CD8-positive, alpha-beta T cell (primary cell): ENCODE measurements at regions of chr3 and their contacts with region 1.

Region 1: GRCh38 chr3:172039436-172040077 is at the start of gene FNDC3B:
- DNase-seq: peak; percentile 84 to 95 (median 90)
- ATAC-seq: peak; percentile 93
- H3K4me3 ChIP-seq: peak within 1 kb of the TSS; percentile 88 to 90
- H3K4me3 Mint-ChIP-seq: peak within 1 kb of the TSS; percentile 99
- H3K27ac ChIP-seq: peak within 1 kb of the TSS; percentile 61 to 84
- H3K27ac Mint-ChIP-seq: peak within 1 kb of the TSS; percentile 97
- H3K4me1 ChIP-seq: peaks cover 20% of the 10 kb centered on the region
- H3K4me1 Mint-ChIP-seq: peaks cover 38% of the 10 kb centered on the region
- H3K27me3 ChIP-seq: no peaks in the 10 kb centered on the region
- H3K27me3 Mint-ChIP-seq: peaks cover 2% of the 10 kb centered on the region
- CTCF ChIP-seq: no peak
- total RNA-seq, gene FNDC3B: 13.2 to 14.4 TPM

Region 2: DNA sequence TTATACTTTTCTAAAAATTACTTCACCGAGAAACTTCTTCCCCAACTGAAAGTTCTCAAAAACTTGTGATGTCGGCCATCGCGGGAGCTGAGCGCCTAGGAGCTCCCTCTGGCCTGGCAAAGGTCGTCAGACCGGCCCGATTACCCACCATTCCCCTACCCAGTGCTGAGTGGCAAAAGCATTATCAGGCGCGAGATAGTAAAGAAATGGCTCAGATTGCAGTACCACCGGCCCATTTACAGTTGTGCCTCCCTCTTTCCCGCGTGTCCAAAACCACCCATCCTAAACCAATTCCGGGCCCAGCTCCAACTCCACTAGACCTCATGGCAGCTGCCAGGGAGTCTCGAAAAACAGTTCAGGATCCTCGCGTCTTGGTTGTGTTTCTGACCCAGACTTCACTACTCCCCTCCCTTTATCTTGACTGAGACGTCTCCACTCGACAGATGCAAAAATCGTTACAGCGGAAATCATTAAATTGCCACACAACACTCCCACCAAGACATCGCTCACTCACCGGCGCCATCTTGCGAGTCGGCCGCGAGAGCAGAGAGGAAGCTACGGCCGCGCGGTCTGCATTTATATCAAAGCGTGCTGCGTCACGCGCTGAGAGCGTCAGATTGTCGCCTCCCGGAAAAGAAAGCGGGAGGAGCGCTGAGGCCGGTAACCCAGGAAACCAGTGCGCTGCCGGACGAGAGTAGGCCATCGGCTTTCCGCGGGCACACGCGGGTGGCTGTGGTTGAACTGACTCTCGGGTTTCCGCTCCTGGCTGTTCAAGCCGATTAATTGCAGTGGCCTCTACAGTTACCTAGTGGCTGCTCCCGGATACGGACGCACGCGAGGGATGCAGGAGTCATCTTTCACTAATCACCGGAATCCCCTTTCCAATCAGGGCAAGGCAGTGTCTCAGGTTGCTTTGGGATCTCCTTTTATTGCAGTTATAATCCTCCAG is 1169.6 kb before region 1 on chr3 and contains the start of gene RPL22L1:
- CTCF ChIA-PET with region 1: no interaction called
- POLR2A ChIA-PET with region 1: no interaction called
- intact Hi-C with region 1: loop called in 1 of 2 experiments (anchors 2 kb)
- DNase-seq: peak; percentile 85 to 97 (median 93)
- ATAC-seq: peak; percentile 93
- H3K4me3 ChIP-seq: peak within 1 kb of the TSS; percentile 73 to 77
- H3K4me3 Mint-ChIP-seq: peak within 1 kb of the TSS; percentile 94
- H3K27ac ChIP-seq: peak within 1 kb of the TSS; percentile 84 to 94
- H3K27ac Mint-ChIP-seq: peak within 1 kb of the TSS; percentile 97
- H3K4me1 ChIP-seq: peaks cover 27% of the 10 kb centered on the region
- H3K4me1 Mint-ChIP-seq: peaks cover 28% of the 10 kb centered on the region
- H3K27me3 ChIP-seq: no peaks in the 10 kb centered on the region
- H3K27me3 Mint-ChIP-seq: no peaks in the 10 kb centered on the region
- CTCF ChIP-seq: no peak
- total RNA-seq, gene RPL22L1: 54.3 to 56.8 TPM

Region 3: GRCh38 chr3:172054115-172054764 is 14.7 kb after region 1 on chr3:
- CTCF ChIA-PET with region 1: interaction called, 5 read pairs
- POLR2A ChIA-PET with region 1: no interaction called
- intact Hi-C with region 1: loop called in 1 of 2 experiments (anchors 2 kb)
- DNase-seq: no peak
- ATAC-seq: no peak
- H3K4me3 ChIP-seq: no peak overlapping the region
- H3K4me3 Mint-ChIP-seq: no peak overlapping the region
- H3K27ac ChIP-seq: peak overlapping the region in 1 of 2 experiments; percentile 10
- H3K27ac Mint-ChIP-seq: peak overlapping the region; percentile 30
- H3K4me1 ChIP-seq: peaks cover 13% of the 10 kb centered on the region
- H3K4me1 Mint-ChIP-seq: peaks cover 28% of the 10 kb centered on the region
- H3K27me3 ChIP-seq: no peaks in the 10 kb centered on the region
- H3K27me3 Mint-ChIP-seq: no peaks in the 10 kb centered on the region
- CTCF ChIP-seq: no peak

Region 4: DNA sequence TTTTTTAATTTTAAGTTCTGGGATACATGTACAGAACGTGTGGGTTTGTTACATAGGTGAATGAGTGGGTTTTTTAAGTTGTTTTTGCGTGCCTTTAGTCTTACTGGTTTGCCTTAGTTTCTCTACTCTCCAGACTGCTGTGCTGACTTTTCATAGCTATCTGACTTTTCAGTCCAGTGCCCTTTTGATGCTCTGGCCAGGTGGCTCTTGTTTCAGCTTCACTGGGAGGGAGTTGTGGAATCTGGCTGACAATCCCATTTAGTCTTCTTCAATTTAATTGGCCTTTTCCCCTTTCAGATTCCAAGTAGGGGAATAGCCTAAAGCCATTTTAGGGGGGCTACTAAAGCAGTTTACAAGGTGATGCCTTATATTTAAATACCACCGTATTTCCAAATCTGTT is 29.9 kb after region 1 on chr3:
- CTCF ChIA-PET with region 1: no interaction called
- POLR2A ChIA-PET with region 1: no interaction called
- intact Hi-C with region 1: no loop called
- DNase-seq: no peak
- ATAC-seq: no peak
- H3K4me3 ChIP-seq: no peak overlapping the region
- H3K4me3 Mint-ChIP-seq: no peak overlapping the region
- H3K27ac ChIP-seq: no peak overlapping the region
- H3K27ac Mint-ChIP-seq: no peak overlapping the region
- H3K4me1 ChIP-seq: peaks cover 14% of the 10 kb centered on the region
- H3K4me1 Mint-ChIP-seq: peaks cover 19% of the 10 kb centered on the region
- H3K27me3 ChIP-seq: no peaks in the 10 kb centered on the region
- H3K27me3 Mint-ChIP-seq: no peaks in the 10 kb centered on the region
- CTCF ChIP-seq: no peak

Region 5: DNA sequence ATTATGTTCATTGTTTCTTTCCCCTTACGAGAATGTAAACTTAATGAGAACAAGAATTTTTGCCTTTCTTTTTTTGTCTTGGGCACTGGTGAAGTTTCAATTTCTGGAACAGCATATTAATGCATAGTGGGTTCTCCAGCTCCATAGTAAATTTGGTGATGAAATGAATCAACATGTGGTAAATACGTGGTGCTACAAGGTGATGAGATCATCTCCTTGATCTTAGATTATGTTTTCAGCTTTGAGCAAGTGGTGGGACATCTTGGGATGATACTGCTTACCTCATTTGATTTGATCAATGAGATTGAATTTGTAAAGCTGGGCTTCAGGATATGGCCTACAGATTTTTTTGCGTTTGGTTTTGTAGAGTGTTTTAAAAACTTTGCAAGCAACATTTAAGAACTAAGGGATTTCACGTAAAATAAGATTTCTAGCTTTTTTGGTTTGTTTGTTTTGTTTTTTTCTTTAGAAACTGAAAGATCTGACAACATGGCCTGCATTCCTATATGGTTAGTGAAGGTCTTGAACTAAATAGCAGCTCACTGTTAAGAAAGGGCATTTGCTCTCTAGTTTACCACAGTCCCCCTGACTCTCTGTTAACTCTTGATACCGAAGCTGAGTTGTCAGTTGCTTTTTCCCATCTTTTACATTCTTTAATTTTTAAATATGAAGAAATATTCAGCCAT is 45.5 kb after region 1 on chr3:
- CTCF ChIA-PET with region 1: no interaction called
- POLR2A ChIA-PET with region 1: no interaction called
- intact Hi-C with region 1: no loop called
- DNase-seq: no peak
- ATAC-seq: no peak
- H3K4me3 ChIP-seq: no peak overlapping the region
- H3K4me3 Mint-ChIP-seq: no peak overlapping the region
- H3K27ac ChIP-seq: no peak overlapping the region
- H3K27ac Mint-ChIP-seq: no peak overlapping the region
- H3K4me1 ChIP-seq: peaks cover 12% of the 10 kb centered on the region
- H3K4me1 Mint-ChIP-seq: peaks cover 18% of the 10 kb centered on the region
- H3K27me3 ChIP-seq: no peaks in the 10 kb centered on the region
- H3K27me3 Mint-ChIP-seq: no peaks in the 10 kb centered on the region
- CTCF ChIP-seq: no peak

Region 6: DNA sequence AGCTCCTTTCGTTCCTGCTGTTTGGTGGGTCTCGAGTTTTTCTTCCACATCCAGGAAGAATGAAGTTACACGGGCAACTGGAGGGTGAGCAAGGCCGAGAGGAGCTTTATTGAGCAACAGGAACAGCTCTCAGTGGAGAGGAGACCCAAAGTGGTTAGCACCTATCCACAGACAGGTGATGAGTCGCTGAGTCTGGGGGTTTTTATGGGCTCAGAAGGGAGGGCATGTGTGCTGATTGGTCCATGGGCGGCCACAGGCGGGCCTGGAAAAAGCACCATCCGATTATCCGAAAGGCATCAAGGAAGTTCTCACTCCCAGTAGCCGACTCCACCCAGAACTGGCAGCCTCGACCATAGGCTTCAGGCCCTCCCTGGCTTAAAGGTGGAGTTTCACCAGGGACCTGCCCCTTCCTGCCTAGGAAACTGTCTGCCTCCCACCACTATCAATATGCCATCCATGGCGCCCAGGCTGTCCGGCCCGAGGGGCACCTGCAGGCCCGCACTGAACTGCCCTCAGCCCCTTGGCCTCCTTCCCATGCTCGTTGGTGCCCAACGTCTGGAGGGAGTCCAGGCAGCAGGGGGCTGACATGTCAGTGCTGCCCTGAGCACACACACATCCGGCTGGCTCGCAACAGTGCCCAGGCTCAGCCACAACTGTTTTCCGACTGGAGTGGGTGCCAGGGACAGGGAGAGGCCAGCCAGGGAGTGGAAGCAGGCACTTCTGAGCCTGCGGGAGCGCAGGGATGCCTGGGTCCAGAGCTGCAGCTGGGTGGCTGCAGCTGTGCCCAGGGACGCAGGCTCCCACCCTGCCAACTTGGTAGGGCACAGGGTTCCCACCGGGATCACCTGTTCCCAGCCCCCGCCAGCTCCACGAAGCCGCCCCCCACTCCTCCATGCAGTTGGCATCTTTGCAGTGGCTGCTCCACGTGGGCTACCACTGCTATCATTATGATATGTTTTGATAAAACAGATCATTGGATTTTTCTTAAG is 170.1 kb after region 1 on chr3:
- CTCF ChIA-PET with region 1: no interaction called
- POLR2A ChIA-PET with region 1: no interaction called
- intact Hi-C with region 1: loop called in 1 of 2 experiments (anchors 10 kb)
- DNase-seq: no peak
- ATAC-seq: no peak
- H3K4me3 ChIP-seq: no peak overlapping the region
- H3K4me3 Mint-ChIP-seq: no peak overlapping the region
- H3K27ac ChIP-seq: no peak overlapping the region
- H3K27ac Mint-ChIP-seq: no peak overlapping the region
- H3K4me1 ChIP-seq: no peaks in the 10 kb centered on the region
- H3K4me1 Mint-ChIP-seq: no peaks in the 10 kb centered on the region
- H3K27me3 ChIP-seq: no peaks in the 10 kb centered on the region
- H3K27me3 Mint-ChIP-seq: no peaks in the 10 kb centered on the region
- CTCF ChIP-seq: no peak

Region 7: GRCh38 chr3:172279191-172279640 is 239.7 kb after region 1 on chr3:
- CTCF ChIA-PET with region 1: interaction called, 28 read pairs
- POLR2A ChIA-PET with region 1: no interaction called
- intact Hi-C with region 1: loop called (anchors 5 to 10 kb)
- DNase-seq: no peak
- ATAC-seq: no peak
- H3K4me3 ChIP-seq: no peak overlapping the region
- H3K4me3 Mint-ChIP-seq: no peak overlapping the region
- H3K27ac ChIP-seq: no peak overlapping the region
- H3K27ac Mint-ChIP-seq: no peak overlapping the region
- H3K4me1 ChIP-seq: no peaks in the 10 kb centered on the region
- H3K4me1 Mint-ChIP-seq: no peaks in the 10 kb centered on the region
- H3K27me3 ChIP-seq: no peaks in the 10 kb centered on the region
- H3K27me3 Mint-ChIP-seq: no peaks in the 10 kb centered on the region
- CTCF ChIP-seq: no peak

Region 8: DNA sequence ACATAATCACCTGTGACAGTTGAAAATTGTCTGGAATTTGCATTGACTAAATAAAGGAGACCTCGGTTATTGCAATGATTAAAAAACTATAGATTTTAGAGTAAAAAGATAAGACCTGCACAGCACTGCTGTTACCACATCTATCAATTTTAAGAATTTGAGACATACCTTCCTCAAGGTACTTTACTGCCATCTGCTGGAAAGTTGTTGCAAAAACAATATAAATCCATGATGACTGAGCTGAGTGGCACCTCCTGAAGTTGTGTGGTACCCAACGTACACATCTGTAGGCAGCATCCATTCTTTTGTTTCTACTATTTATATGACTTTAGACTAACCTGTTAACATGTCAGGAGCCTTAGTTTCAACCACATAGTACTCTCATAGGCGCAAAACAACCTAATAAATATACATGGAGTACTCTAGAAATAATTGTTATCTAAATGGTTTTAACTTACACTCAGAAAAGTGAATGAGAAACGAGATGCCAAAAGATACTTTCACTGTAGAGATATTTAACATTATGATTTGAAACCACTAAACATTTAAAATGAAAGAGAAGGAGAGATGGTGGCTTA is 302.0 kb after region 1 on chr3:
- CTCF ChIA-PET with region 1: interaction called, 30 read pairs
- POLR2A ChIA-PET with region 1: no interaction called
- intact Hi-C with region 1: loop called in 1 of 2 experiments (anchors 2 kb)
- DNase-seq: peak in 3 of 9 experiments; percentile 15 to 73 (median 63)
- ATAC-seq: peak; percentile 75
- H3K4me3 ChIP-seq: no peak overlapping the region
- H3K4me3 Mint-ChIP-seq: no peak overlapping the region
- H3K27ac ChIP-seq: no peak overlapping the region
- H3K27ac Mint-ChIP-seq: no peak overlapping the region
- H3K4me1 ChIP-seq: no peaks in the 10 kb centered on the region
- H3K4me1 Mint-ChIP-seq: no peaks in the 10 kb centered on the region
- H3K27me3 ChIP-seq: no peaks in the 10 kb centered on the region
- H3K27me3 Mint-ChIP-seq: no peaks in the 10 kb centered on the region
- CTCF ChIP-seq: peak; percentile 74

Region 9: DNA sequence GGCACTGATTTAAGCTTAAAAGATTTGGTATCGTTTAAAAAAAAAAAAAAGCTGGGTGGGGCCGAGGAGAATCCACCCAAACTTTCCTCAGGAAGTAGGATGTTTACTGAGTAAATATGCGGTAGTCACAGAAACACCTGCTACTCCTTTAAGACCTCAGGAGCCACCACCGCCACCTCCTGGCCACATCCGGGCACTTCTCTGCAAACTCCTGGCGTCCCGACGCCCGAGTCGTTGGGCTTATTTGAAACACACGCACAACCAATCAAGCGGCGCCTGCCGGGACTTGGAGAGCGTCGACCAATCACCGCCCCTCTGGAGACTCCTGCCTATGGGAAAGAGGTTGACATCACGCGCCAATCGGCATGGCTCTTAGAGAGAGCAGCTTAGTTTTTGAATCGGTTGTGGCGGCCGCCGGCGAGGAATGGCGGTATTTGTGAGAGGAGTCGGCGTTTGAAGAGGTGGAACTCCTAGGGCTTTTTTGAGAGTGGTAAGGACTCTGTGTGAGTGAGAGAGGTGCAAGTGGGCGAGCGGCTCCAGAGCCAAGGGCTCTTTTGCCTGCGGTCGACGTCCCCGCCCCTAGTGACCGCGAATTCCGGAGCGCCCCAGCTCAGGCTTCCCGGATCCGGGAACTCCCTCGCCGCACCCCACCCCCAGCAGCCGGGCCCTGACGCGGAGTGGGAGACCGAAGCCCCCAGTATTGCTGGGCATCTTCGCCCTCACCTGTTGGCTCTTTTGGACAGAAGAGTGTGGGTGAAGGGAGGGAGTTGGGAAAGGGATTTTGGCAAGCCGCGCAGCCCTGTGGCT is 711.0 kb after region 1 on chr3 and contains the start of gene ECT2:
- CTCF ChIA-PET with region 1: no interaction called
- POLR2A ChIA-PET with region 1: no interaction called
- intact Hi-C with region 1: loop called (anchors 2 to 5 kb)
- DNase-seq: peak; percentile 92 to 99 (median 96)
- ATAC-seq: peak; percentile 98
- H3K4me3 ChIP-seq: peak within 1 kb of the TSS; percentile 90 to 96
- H3K4me3 Mint-ChIP-seq: peak within 1 kb of the TSS; percentile 98
- H3K27ac ChIP-seq: peak within 1 kb of the TSS; percentile 66 to 69
- H3K27ac Mint-ChIP-seq: peak within 1 kb of the TSS; percentile 62
- H3K4me1 ChIP-seq: peaks cover 12% of the 10 kb centered on the region
- H3K4me1 Mint-ChIP-seq: peaks cover 15% of the 10 kb centered on the region
- H3K27me3 ChIP-seq: no peaks in the 10 kb centered on the region
- H3K27me3 Mint-ChIP-seq: no peaks in the 10 kb centered on the region
- CTCF ChIP-seq: peak; percentile 72
- total RNA-seq, gene ECT2: 1.3 to 1.5 TPM